ENCODE measurements at regions of chr19 and their contacts with region 1.

Region 1: GRCh38 chr19:55882626-55883025 is 46.3 kb downstream of the NLRP4 start:
- DNase-seq: no peak
- H3K4me3 ChIP-seq: no peak overlapping the region
- H3K27ac ChIP-seq: no peak overlapping the region
- H3K4me1 ChIP-seq: no peaks in the 10 kb centered on the region
- H3K27me3 ChIP-seq: no peaks in the 10 kb centered on the region
- CTCF ChIP-seq: no peak
- POLR2A ChIP-seq: no peak

Region 2: GRCh38 chr19:54561840-54562239 is 1320.8 kb before region 1 on chr19:
- intact Hi-C with region 1: loop called (anchors 5 kb)
- DNase-seq: no peak
- H3K4me3 ChIP-seq: no peak overlapping the region
- H3K27ac ChIP-seq: no peak overlapping the region
- H3K4me1 ChIP-seq: no peaks in the 10 kb centered on the region
- H3K27me3 ChIP-seq: peaks cover 0 to 5% of the 10 kb centered on the region in 2 donors
- CTCF ChIP-seq: no peak
- POLR2A ChIP-seq: no peak

Measured in breast epithelium (tissue), 4 donors.